Caco-2 (cell line): ENCODE measurements at regions of chr3 and their contacts with region 1.

Region 1: GRCh38 chr3:182392182-182392937 is 400.9 kb upstream of the ATP11B start:
- DNase-seq: no peak
- H3K4me3 ChIP-seq: no peak overlapping the region
- H3K4me3 Mint-ChIP-seq: no peak overlapping the region
- H3K27ac Mint-ChIP-seq: no peak overlapping the region
- H3K4me1 ChIP-seq: peaks cover 16% of the 10 kb centered on the region
- H3K4me1 Mint-ChIP-seq: peaks cover 24% of the 10 kb centered on the region
- H3K27me3 ChIP-seq: no peaks in the 10 kb centered on the region
- H3K27me3 Mint-ChIP-seq: no peaks in the 10 kb centered on the region
- CTCF ChIP-seq: no peak

Region 2: DNA sequence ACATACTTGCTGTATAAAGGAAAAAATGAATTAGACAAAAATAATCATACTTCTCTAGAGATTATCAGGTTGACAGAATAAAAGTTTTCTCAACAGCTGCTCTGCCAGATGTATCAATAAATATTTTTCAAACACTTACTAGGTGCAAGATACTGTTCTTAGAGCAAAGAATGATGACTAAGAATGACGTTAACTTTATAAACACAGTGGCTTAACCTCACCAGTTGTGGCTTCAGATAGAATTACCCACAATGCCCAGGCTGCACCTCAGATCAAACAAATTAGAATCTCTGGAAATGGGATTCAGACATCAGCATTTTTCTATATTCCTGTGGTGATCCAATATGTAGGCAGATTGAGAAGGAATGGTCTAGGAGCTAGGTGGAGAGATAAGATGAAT is 21.4 kb before region 1 on chr3:
- CTCF ChIA-PET with region 1: no interaction called
- POLR2A ChIA-PET with region 1: no interaction called
- intact Hi-C with region 1: no loop called
- DNase-seq: no peak
- H3K4me3 ChIP-seq: no peak overlapping the region
- H3K4me3 Mint-ChIP-seq: no peak overlapping the region
- H3K27ac Mint-ChIP-seq: no peak overlapping the region
- H3K4me1 ChIP-seq: no peaks in the 10 kb centered on the region
- H3K4me1 Mint-ChIP-seq: no peaks in the 10 kb centered on the region
- H3K27me3 ChIP-seq: no peaks in the 10 kb centered on the region
- H3K27me3 Mint-ChIP-seq: no peaks in the 10 kb centered on the region
- CTCF ChIP-seq: no peak

Region 3: GRCh38 chr3:182405759-182406158 is 13.4 kb after region 1 on chr3:
- CTCF ChIA-PET with region 1: no interaction called
- POLR2A ChIA-PET with region 1: no interaction called
- intact Hi-C with region 1: no loop called
- DNase-seq: no peak
- H3K4me3 ChIP-seq: no peak overlapping the region
- H3K4me3 Mint-ChIP-seq: no peak overlapping the region
- H3K27ac Mint-ChIP-seq: no peak overlapping the region
- H3K4me1 ChIP-seq: no peaks in the 10 kb centered on the region
- H3K4me1 Mint-ChIP-seq: no peaks in the 10 kb centered on the region
- H3K27me3 ChIP-seq: no peaks in the 10 kb centered on the region
- H3K27me3 Mint-ChIP-seq: no peaks in the 10 kb centered on the region
- CTCF ChIP-seq: no peak

Region 4: GRCh38 chr3:182490596-182491491 is 98.5 kb after region 1 on chr3:
- CTCF ChIA-PET with region 1: interaction called, 5 read pairs
- POLR2A ChIA-PET with region 1: no interaction called
- intact Hi-C with region 1: loop called (anchors 5 kb)
- DNase-seq: peak in 1 of 2 experiments; percentile 22
- H3K4me3 ChIP-seq: no peak overlapping the region
- H3K4me3 Mint-ChIP-seq: no peak overlapping the region
- H3K27ac Mint-ChIP-seq: no peak overlapping the region
- H3K4me1 ChIP-seq: no peaks in the 10 kb centered on the region
- H3K4me1 Mint-ChIP-seq: no peaks in the 10 kb centered on the region
- H3K27me3 ChIP-seq: no peaks in the 10 kb centered on the region
- H3K27me3 Mint-ChIP-seq: no peaks in the 10 kb centered on the region
- CTCF ChIP-seq: peak; percentile 25 to 39